Ascending aorta (tissue), 2 donors: ENCODE measurements at regions of chr6 and their contacts with region 1.

Region 1: GRCh38 chr6:121504227-121504626 is 68.8 kb downstream of the GJA1 start:
- DNase-seq: no peak
- H3K4me3 ChIP-seq: no peak overlapping the region
- H3K27ac ChIP-seq: peak overlapping the region; percentile 59 to 63
- H3K4me1 ChIP-seq: peaks cover 0 to 16% of the 10 kb centered on the region in 2 donors
- H3K27me3 ChIP-seq: no peaks in the 10 kb centered on the region
- CTCF ChIP-seq: no peak

Region 2: GRCh38 chr6:121531658-121532169 is 27.5 kb after region 1 on chr6:
- intact Hi-C with region 1: no loop called
- DNase-seq: no peak
- H3K4me3 ChIP-seq: no peak overlapping the region
- H3K27ac ChIP-seq: no peak overlapping the region
- H3K4me1 ChIP-seq: no peaks in the 10 kb centered on the region
- H3K27me3 ChIP-seq: no peaks in the 10 kb centered on the region
- CTCF ChIP-seq: no peak

Region 3: GRCh38 chr6:121584586-121585369 is 80.6 kb after region 1 on chr6:
- intact Hi-C with region 1: loop called (anchors 5 kb)
- DNase-seq: no peak
- H3K4me3 ChIP-seq: no peak overlapping the region
- H3K27ac ChIP-seq: peak overlapping the region; percentile 57 to 69
- H3K4me1 ChIP-seq: peaks cover 0 to 15% of the 10 kb centered on the region in 2 donors
- H3K27me3 ChIP-seq: no peaks in the 10 kb centered on the region
- CTCF ChIP-seq: no peak